ENCODE measurements at regions of chr1 and their contacts with region 1.

Region 1: GRCh38 chr1:202315576-202316168 is 26.1 kb downstream of the UBE2T start:
- DNase-seq: peak; percentile 72
- ATAC-seq: peak; percentile 86
- H3K4me3 ChIP-seq: no peak overlapping the region
- H3K4me3 Mint-ChIP-seq: no peak overlapping the region
- H3K27ac ChIP-seq: no peak overlapping the region
- H3K27ac Mint-ChIP-seq: no peak overlapping the region
- H3K4me1 ChIP-seq: no peaks in the 10 kb centered on the region
- H3K4me1 Mint-ChIP-seq: no peaks in the 10 kb centered on the region
- H3K27me3 ChIP-seq: peaks cover 0 to 9% (median 4%) of the 10 kb centered on the region in 4 experiments
- H3K27me3 Mint-ChIP-seq: peaks cover 13% of the 10 kb centered on the region
- CTCF ChIP-seq: peak; percentile 93

Region 2: DNA sequence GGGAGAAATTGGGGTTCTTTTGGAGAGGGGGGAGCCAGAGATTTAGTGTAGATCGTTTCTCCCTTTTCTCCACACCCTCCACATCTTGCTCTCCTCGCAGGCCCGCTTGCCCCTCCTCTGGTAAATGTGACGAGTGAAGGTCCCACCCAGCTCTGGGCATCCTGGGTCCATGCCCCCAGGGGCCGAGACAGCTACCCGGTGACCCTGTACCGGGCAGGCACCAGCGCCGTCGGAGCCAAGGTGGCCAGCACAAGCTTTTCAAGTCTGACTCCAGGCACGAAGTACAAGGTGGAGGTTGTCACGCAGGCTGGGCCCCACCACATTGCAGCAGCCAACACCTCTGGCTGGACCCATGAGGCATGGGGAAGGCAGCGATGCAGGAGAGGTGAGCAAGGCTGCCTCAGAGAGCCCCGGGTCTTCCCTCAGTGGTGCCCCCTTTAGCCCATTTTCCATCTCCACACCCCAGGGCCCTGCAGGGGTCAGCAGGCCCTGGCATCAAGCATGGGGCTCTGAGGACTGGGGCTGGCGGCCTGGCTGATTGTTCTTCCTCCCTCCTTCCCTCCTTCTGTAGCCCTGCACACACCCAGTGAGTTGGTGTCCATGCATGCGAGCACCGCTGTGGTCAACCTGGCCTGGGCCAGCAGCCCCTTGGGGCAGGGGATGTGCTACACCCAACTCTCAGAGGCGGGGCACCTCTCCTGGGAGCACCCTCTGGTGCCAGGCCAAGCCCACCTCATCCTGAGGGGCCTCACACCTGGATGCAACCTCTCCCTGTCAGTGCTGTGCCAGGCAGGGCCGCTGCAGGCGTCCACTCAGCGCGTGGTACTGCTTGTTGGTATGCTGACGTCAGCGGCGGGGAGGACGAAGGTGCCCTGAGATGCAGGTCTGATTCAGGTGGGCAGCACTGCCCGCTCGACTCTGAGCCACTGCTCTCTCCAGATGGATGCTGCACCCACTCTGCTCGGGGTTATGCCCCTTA is 138.4 kb before region 1 on chr1:
- CTCF ChIA-PET with region 1: interaction called, 10 read pairs
- POLR2A ChIA-PET with region 1: no interaction called
- intact Hi-C with region 1: no loop called
- DNase-seq: no peak
- ATAC-seq: no peak
- H3K4me3 ChIP-seq: no peak overlapping the region
- H3K4me3 Mint-ChIP-seq: no peak overlapping the region
- H3K27ac ChIP-seq: no peak overlapping the region
- H3K27ac Mint-ChIP-seq: no peak overlapping the region
- H3K4me1 ChIP-seq: no peaks in the 10 kb centered on the region
- H3K4me1 Mint-ChIP-seq: peaks cover 2% of the 10 kb centered on the region
- H3K27me3 ChIP-seq: peaks cover 0 to 5% (median 0%) of the 10 kb centered on the region in 4 experiments
- H3K27me3 Mint-ChIP-seq: peaks cover 4% of the 10 kb centered on the region
- CTCF ChIP-seq: no peak

Region 3: DNA sequence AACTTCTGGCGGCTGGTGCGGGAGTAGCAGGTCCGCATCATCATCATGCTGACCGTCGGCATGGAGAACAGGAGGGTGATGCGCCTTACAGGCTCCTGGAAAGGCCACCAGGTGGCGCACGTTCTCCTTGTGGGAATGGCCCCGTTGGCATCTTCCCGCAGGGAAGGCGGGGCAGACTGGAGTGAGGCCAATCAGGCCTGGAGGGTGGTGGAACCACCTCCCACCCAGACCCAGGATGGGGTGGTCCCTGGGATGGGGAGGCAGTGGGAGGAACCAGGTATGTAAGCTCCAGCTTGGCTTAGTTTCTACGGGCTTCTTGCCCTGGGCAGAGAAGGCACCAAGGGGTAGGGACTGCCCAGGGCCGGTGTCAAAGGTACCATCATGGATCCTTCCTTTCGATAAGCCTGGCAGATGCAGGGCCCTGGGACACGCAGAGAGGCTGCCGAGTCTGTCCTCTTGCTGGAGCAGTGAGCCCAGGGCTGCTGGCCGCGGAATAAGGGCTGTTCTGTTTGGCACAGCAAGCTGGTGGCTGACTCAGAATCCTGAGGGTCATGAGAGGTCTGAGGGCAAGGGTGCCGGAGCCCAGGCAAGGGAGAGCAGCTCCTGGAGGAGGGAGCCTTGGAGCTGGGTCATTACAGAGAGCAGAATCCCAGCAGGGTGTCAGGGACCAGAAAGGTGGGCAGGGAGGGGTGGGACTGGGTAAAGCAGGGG is 130.8 kb before region 1 on chr1:
- CTCF ChIA-PET with region 1: interaction called, 13 read pairs
- POLR2A ChIA-PET with region 1: no interaction called
- intact Hi-C with region 1: no loop called
- DNase-seq: peak; percentile 71
- ATAC-seq: peak; percentile 50
- H3K4me3 ChIP-seq: no peak overlapping the region
- H3K4me3 Mint-ChIP-seq: no peak overlapping the region
- H3K27ac ChIP-seq: no peak overlapping the region
- H3K27ac Mint-ChIP-seq: no peak overlapping the region
- H3K4me1 ChIP-seq: peaks cover 5 to 6% of the 10 kb centered on the region in 2 donors
- H3K4me1 Mint-ChIP-seq: peaks cover 9% of the 10 kb centered on the region
- H3K27me3 ChIP-seq: peaks cover 0 to 31% (median 5%) of the 10 kb centered on the region in 4 experiments
- H3K27me3 Mint-ChIP-seq: peaks cover 46% of the 10 kb centered on the region
- CTCF ChIP-seq: peak; percentile 78

Region 4: GRCh38 chr1:202192770-202193613 is 122.7 kb before region 1 on chr1:
- CTCF ChIA-PET with region 1: interaction called, 63 read pairs
- POLR2A ChIA-PET with region 1: no interaction called
- intact Hi-C with region 1: loop called (anchors 1 kb)
- DNase-seq: peak; percentile 75
- ATAC-seq: peak; percentile 71
- H3K4me3 ChIP-seq: no peak overlapping the region
- H3K4me3 Mint-ChIP-seq: peak overlapping the region; percentile 58
- H3K27ac ChIP-seq: no peak overlapping the region
- H3K27ac Mint-ChIP-seq: no peak overlapping the region
- H3K4me1 ChIP-seq: peaks cover 14 to 19% of the 10 kb centered on the region in 2 donors
- H3K4me1 Mint-ChIP-seq: peaks cover 18% of the 10 kb centered on the region
- H3K27me3 ChIP-seq: peaks cover 0 to 36% (median 10%) of the 10 kb centered on the region in 4 experiments
- H3K27me3 Mint-ChIP-seq: peaks cover 54% of the 10 kb centered on the region
- CTCF ChIP-seq: peak; percentile 89

Region 5: GRCh38 chr1:202274611-202275010 is 41.1 kb before region 1 on chr1:
- CTCF ChIA-PET with region 1: no interaction called
- POLR2A ChIA-PET with region 1: no interaction called
- intact Hi-C with region 1: loop called (anchors 1 kb)
- DNase-seq: peak; percentile 13
- ATAC-seq: no peak
- H3K4me3 ChIP-seq: no peak overlapping the region
- H3K4me3 Mint-ChIP-seq: no peak overlapping the region
- H3K27ac ChIP-seq: no peak overlapping the region
- H3K27ac Mint-ChIP-seq: no peak overlapping the region
- H3K4me1 ChIP-seq: no peaks in the 10 kb centered on the region
- H3K4me1 Mint-ChIP-seq: no peaks in the 10 kb centered on the region
- H3K27me3 ChIP-seq: peaks cover 0 to 18% (median 0%) of the 10 kb centered on the region in 4 experiments
- H3K27me3 Mint-ChIP-seq: peaks cover 30% of the 10 kb centered on the region
- CTCF ChIP-seq: no peak